Dendritic cell treated with granulocyte-macrophage colony-stimulating factor and Interleukin-4, amounts not matched to agents 40 ng/mL and 50 ng/mL, for 4 days (primary cell): ENCODE measurements at regions of chr10 and their contacts with region 1.

Region 1: GRCh38 chr10:91829268-91829667 is 31.0 kb downstream of the TNKS2 start:
- H3K4me3 Mint-ChIP-seq: no peak overlapping the region
- H3K27ac Mint-ChIP-seq: no peak overlapping the region
- H3K4me1 Mint-ChIP-seq: no peaks in the 10 kb centered on the region
- H3K27me3 Mint-ChIP-seq: no peaks in the 10 kb centered on the region

Region 2: DNA sequence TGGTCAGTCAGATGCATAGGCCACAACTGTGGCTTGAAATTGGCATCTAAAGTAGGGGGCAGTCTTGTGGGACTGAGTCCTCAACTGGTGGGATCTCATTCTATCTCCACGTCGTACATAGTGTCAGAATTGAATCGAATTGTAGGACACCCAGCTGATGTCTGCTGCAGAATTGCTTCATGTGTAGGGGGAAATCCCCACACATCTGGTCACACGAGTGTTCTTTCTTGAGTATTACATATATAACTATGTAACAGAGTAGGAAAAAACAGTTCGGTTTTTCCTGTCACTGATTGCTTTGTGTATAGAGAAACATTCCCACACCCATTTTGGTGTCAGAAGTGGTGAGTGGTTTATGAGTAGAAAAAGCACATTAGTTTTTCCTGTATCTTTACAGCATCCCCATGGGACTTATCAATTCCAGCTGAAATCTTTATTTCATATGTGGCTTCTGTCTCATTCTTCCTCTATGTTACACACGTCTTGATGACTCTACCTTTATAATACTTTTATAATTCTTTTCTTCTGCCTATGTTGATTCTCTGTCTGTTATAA is 688.2 kb before region 1 on chr10:
- intact Hi-C with region 1: no loop called
- H3K4me3 Mint-ChIP-seq: no peak overlapping the region
- H3K27ac Mint-ChIP-seq: no peak overlapping the region
- H3K4me1 Mint-ChIP-seq: no peaks in the 10 kb centered on the region
- H3K27me3 Mint-ChIP-seq: no peaks in the 10 kb centered on the region

Region 3: DNA sequence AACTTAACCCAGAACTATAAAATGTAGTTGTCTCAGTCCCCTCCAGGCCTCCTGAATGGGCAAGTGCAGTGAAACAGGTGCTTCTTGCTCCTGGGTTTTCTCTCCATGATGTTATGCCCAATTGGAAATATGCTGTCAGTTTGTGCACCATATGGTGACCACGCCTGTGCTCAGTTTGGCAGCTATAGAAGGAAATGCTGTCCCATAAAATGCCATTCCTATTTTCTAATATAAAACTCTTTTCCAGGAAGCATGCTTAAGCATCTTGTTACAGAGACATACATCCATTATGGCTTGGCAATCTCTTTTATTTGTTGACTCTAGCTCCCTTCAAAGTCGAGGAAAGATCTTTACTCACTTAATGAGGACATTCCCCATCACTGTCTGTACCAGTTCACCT is 34.8 kb after region 1 on chr10:
- intact Hi-C with region 1: loop called (anchors 5 kb)
- H3K4me3 Mint-ChIP-seq: no peak overlapping the region
- H3K27ac Mint-ChIP-seq: no peak overlapping the region
- H3K4me1 Mint-ChIP-seq: no peaks in the 10 kb centered on the region
- H3K27me3 Mint-ChIP-seq: no peaks in the 10 kb centered on the region

Region 4: GRCh38 chr10:91953600-91954160 is 124.4 kb after region 1 on chr10:
- intact Hi-C with region 1: loop called (anchors 5 kb)
- H3K4me3 Mint-ChIP-seq: no peak overlapping the region
- H3K27ac Mint-ChIP-seq: no peak overlapping the region
- H3K4me1 Mint-ChIP-seq: no peaks in the 10 kb centered on the region
- H3K27me3 Mint-ChIP-seq: no peaks in the 10 kb centered on the region